Sciatic nerve (tissue), 2 donors: ENCODE measurements at regions of chr1 and their contacts with region 1.

Region 1: GRCh38 chr1:192689459-192689858 is 53.5 kb downstream of the RGS13 start:
- DNase-seq: no peak
- ATAC-seq: no peak

Region 2: DNA sequence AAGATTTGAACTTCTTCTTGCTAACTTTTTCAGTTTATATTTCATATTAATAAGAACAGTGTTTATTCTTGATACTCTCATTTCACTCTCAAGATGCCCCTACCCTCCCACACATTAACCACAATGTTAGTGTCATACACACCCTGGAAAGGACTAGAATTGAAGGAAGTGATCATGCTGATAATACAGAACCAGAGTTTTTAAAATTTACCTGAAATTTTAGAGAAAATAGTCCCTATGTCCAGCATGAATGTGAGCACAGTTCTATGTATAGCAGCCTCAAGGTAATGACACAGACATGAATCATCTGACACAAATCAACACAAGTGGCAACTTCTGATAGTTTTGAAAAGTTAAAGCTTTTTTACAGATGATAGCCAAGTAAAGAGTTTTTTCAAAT is 87.9 kb before region 1 on chr1:
- intact Hi-C with region 1: no loop called
- DNase-seq: no peak
- ATAC-seq: no peak

Region 3: GRCh38 chr1:192724670-192725069 is 35.2 kb after region 1 on chr1:
- intact Hi-C with region 1: no loop called
- DNase-seq: no peak
- ATAC-seq: no peak

Region 4: DNA sequence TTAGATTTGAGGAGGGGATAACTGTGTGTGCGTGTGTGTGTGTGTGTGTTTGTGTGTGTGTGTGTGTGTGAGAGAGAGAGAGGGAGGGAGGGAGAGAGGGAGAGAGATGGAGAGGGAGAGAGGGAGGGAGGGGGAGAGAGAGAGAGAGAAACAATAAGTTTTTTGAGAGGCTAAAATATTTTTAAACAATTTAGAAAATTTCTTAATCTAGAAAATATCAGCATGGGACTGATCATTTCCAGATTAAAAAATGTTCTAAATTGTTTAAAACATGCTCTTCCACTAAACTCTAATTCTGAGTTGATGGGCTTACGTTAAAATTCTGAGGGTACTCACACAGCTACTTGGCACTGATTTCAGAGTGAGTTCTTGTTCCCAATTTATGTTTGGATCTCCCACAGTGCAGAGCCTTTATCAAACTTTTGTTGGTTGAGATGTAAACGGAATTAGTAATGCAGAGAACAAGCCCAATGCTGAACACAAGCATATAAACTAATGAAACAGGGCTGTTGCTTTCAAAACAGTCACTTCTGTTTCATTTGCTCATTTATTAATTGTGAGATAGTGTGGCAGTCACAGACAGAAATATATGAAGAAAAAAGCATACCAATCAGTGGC is 45.9 kb after region 1 on chr1:
- intact Hi-C with region 1: loop called (anchors 1 kb)
- DNase-seq: no peak
- ATAC-seq: no peak

Region 5: GRCh38 chr1:192766009-192766625 is 76.7 kb after region 1 on chr1:
- intact Hi-C with region 1: no loop called
- DNase-seq: no peak
- ATAC-seq: no peak